ENCODE measurements at regions of chr18 and their contacts with region 1.

Region 1: GRCh38 chr18:69948919-69949537 is 1.4 kb upstream of the CD226 start:
- DNase-seq: peak; percentile 83
- H3K4me3 Mint-ChIP-seq: no peak overlapping the region
- H3K27ac Mint-ChIP-seq: no peak overlapping the region
- H3K4me1 Mint-ChIP-seq: peaks cover 46% of the 10 kb centered on the region
- H3K27me3 Mint-ChIP-seq: no peaks in the 10 kb centered on the region

Region 2: GRCh38 chr18:69978732-69979715 is 30.0 kb after region 1 on chr18:
- CTCF ChIA-PET with region 1: no interaction called
- intact Hi-C with region 1: loop called (anchors 1 kb)
- DNase-seq: peak; percentile 27
- H3K4me3 Mint-ChIP-seq: no peak overlapping the region
- H3K27ac Mint-ChIP-seq: peak overlapping the region; percentile 37
- H3K4me1 Mint-ChIP-seq: peaks cover 44% of the 10 kb centered on the region
- H3K27me3 Mint-ChIP-seq: no peaks in the 10 kb centered on the region

Region 3: DNA sequence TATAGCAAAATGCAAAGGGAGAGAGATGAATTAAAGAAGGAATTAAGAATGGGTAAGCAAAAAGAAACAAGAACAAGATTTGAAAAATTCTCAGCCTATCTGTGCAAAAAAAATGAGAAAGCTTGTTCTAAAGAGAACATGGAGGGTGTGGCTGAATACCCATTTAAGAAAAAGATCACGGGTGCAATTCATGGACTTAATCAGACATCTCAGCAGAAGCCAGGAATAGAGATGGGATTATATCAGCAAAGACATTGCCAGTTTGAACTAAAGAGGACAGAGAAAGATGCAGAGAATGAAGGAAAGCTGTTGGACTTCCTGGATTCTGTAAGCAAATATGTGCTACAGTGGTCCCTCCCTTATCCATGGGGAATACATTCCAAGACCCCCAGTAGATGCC is 140.8 kb after region 1 on chr18:
- CTCF ChIA-PET with region 1: no interaction called
- intact Hi-C with region 1: no loop called
- DNase-seq: no peak
- H3K4me3 Mint-ChIP-seq: no peak overlapping the region
- H3K27ac Mint-ChIP-seq: no peak overlapping the region
- H3K4me1 Mint-ChIP-seq: no peaks in the 10 kb centered on the region
- H3K27me3 Mint-ChIP-seq: no peaks in the 10 kb centered on the region

Measured in activated naive CD4-positive, alpha-beta T cell treated with anti-CD3 and anti-CD28 coated beads for 36 hours (primary cell).